ENCODE measurements at regions of chr1 and their contacts with region 1.

Region 1: GRCh38 chr1:54944610-54945544 is 35.6 kb upstream of the TMEM61 start:
- DNase-seq: peak; percentile 81
- H3K4me3 Mint-ChIP-seq: no peak overlapping the region
- H3K27ac Mint-ChIP-seq: no peak overlapping the region
- H3K4me1 Mint-ChIP-seq: peaks cover 2% of the 10 kb centered on the region
- H3K27me3 Mint-ChIP-seq: peaks cover 2% of the 10 kb centered on the region

Region 2: DNA sequence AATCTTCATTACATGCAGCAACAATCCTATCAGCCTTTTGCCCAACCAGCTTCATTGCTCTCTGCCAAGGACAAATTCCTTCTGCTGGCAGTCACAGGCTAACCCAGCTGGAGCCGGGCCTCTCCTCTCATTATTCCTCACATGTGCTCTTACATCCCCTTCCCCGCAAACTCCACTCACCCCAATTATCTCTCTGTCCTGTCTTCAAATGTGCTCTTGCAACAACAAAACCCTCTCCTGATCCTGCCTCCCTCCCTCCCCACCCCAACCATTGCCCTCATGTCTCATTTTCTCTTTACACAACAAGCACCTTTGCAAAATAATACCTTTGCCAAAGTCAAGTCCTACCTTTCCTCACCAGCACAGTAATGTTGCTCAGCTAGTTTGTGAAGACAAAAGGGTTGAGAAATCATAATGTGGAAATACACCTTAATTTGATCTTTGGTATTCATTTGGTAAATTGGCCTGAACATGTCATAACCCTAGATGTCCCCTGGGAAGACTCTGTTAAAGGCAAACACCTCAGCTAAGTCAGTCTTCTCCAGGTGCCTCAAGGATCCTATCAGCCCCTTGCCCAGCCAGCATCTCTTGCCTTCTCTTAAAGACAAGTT is 21.9 kb before region 1 on chr1:
- CTCF ChIA-PET with region 1: interaction called, 10 read pairs
- intact Hi-C with region 1: no loop called
- DNase-seq: no peak
- H3K4me3 Mint-ChIP-seq: no peak overlapping the region
- H3K27ac Mint-ChIP-seq: no peak overlapping the region
- H3K4me1 Mint-ChIP-seq: no peaks in the 10 kb centered on the region
- H3K27me3 Mint-ChIP-seq: peaks cover 6% of the 10 kb centered on the region

Region 3: GRCh38 chr1:54989968-54990810 is 45.3 kb after region 1 on chr1:
- CTCF ChIA-PET with region 1: interaction called, 72 read pairs
- intact Hi-C with region 1: no loop called
- DNase-seq: no peak
- H3K4me3 Mint-ChIP-seq: no peak overlapping the region
- H3K27ac Mint-ChIP-seq: no peak overlapping the region
- H3K4me1 Mint-ChIP-seq: no peaks in the 10 kb centered on the region
- H3K27me3 Mint-ChIP-seq: peaks cover 3% of the 10 kb centered on the region

Region 4: DNA sequence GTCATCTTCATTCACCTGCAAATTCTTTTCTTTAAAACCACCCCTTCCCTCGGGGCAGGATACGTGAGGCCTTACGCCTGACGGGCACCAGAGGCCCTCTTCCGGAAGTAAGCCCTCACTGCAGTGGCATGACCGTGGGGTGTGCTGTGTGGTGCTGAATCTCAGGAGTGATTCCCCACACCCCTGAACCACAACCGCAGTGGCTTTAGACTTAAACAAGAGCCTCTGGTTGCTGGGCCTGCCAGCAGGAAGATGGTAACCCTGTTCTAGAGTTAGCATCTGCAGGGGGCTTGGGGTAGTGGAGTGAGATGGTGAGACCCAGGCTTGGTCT is 66.0 kb after region 1 on chr1:
- CTCF ChIA-PET with region 1: interaction called, 11 read pairs
- intact Hi-C with region 1: no loop called
- DNase-seq: no peak
- H3K4me3 Mint-ChIP-seq: no peak overlapping the region
- H3K27ac Mint-ChIP-seq: no peak overlapping the region
- H3K4me1 Mint-ChIP-seq: no peaks in the 10 kb centered on the region
- H3K27me3 Mint-ChIP-seq: no peaks in the 10 kb centered on the region

Region 5: GRCh38 chr1:55277377-55278130 is 332.7 kb after region 1 on chr1:
- CTCF ChIA-PET with region 1: no interaction called
- intact Hi-C with region 1: loop called (anchors 1 kb)
- DNase-seq: peak; percentile 94
- H3K4me3 Mint-ChIP-seq: peak overlapping the region; percentile 5
- H3K27ac Mint-ChIP-seq: peak overlapping the region; percentile 37
- H3K4me1 Mint-ChIP-seq: peaks cover 22% of the 10 kb centered on the region
- H3K27me3 Mint-ChIP-seq: peaks cover 2% of the 10 kb centered on the region